AG04450 (cell line): ENCODE measurements at regions of chr10 and their contacts with region 1.

Region 1: GRCh38 chr10:30987463-30987862 is 44.2 kb downstream of the ZNF438 start:
- DNase-seq: no peak
- H3K4me3 ChIP-seq: no peak overlapping the region
- H3K27ac ChIP-seq: no peak overlapping the region
- H3K27me3 ChIP-seq: no peaks in the 10 kb centered on the region
- CTCF ChIP-seq: no peak

Region 2: DNA sequence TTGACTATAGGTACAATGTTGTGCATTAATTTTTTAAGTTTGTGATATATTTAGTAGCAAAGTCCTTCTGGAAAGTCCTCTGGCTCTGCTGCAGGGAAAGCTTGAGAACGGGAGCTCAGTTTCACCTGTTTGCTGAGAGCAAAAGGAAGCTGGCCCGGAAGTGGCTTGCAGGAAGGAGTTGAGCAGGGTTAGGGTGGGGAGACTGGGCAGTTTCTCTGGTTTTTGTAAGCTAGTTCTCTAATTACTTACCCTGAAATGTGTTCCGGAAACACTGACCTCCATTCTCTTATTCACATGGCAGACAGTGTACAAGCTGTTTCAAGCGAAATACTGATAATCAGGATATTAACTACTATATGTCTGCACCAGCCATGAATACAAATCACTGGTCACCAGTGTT is 531.2 kb before region 1 on chr10:
- CTCF ChIA-PET with region 1: no interaction called
- POLR2A ChIA-PET with region 1: no interaction called
- DNase-seq: no peak
- H3K4me3 ChIP-seq: no peak overlapping the region
- H3K27ac ChIP-seq: no peak overlapping the region
- H3K27me3 ChIP-seq: no peaks in the 10 kb centered on the region
- CTCF ChIP-seq: no peak

Region 3: DNA sequence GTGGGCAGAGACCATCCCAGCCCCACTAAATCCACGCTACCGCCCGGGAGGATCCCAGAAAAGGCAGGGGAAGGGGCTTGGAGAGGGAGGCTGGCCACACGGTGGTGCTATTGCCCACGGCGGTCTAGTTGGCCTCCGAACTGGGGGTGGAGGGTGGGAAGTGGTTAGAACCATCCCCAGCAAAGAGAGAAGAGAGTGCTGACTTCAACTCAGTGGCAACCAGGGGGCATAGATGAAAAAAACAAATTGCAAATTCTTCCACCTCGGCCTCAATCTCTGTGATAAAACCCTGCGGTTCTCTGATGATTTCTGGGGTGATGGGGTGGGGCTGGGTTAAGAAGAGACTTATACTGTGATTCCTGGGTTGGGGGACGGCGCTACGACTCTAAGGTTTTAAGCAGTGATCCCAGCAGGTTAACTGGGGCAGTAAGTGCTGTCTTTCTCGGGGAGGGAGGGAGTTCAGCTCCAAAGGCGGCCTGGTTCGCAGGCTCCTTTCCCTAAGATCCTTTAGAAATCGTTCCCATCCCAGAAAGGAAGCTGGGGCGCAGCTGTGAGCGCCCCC is 203.4 kb before region 1 on chr10:
- CTCF ChIA-PET with region 1: interaction called, 12 read pairs
- POLR2A ChIA-PET with region 1: no interaction called
- DNase-seq: peak; percentile 81
- H3K4me3 ChIP-seq: no peak overlapping the region
- H3K27ac ChIP-seq: peak overlapping the region; percentile 87
- H3K27me3 ChIP-seq: no peaks in the 10 kb centered on the region
- CTCF ChIP-seq: peak; percentile 95